ENCODE measurements at regions of chr19 and their contacts with region 1.

Region 1: DNA sequence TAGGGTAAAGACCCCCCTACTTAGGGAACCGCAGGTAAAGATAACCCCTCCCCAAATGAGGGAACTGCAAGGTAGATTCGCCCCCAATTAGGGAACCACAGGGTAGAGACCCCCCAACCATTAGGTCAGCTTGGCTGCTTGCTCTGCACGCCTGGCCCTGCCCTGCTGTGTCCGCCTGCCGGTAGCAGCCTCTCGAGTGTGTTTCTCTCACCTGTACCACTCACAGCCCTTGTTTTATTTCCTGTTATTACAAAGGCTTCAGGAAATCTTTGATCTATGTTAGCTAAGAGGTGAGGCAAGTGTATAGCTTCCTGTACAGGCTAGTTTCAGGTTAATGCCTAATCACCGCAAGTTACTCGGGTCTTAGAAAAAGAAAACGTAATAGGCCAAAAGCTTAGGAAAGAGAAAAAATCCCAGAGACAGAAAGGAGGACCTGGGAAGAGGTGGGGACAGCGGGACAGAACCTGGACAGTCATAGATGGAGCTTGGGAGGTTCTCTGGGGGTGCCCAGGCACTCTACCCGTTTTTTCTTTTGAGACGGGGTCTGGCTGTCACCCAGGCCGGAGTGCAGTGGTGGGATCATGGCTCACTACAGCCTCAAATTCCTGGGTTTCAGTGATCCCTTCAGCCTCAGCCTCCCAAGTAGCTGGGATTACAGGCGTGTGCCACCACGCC is 23.1 kb upstream of the EIF3G start:
- DNase-seq: peak; percentile 75 to 82 (median 77)
- H3K4me3 ChIP-seq: peak overlapping the region; percentile 34 to 44
- H3K4me3 Mint-ChIP-seq: peak overlapping the region; percentile 73 to 97 (median 87)
- H3K27ac ChIP-seq: peak overlapping the region; percentile 66
- H3K27ac Mint-ChIP-seq: peak overlapping the region; percentile 93 to 100 (median 99)
- H3K4me1 ChIP-seq: peaks cover 51% of the 10 kb centered on the region
- H3K4me1 Mint-ChIP-seq: peaks cover 18 to 52% (median 41%) of the 10 kb centered on the region in 4 donors
- H3K27me3 ChIP-seq: no peaks in the 10 kb centered on the region
- H3K27me3 Mint-ChIP-seq: no peaks in the 10 kb centered on the region

Region 2: DNA sequence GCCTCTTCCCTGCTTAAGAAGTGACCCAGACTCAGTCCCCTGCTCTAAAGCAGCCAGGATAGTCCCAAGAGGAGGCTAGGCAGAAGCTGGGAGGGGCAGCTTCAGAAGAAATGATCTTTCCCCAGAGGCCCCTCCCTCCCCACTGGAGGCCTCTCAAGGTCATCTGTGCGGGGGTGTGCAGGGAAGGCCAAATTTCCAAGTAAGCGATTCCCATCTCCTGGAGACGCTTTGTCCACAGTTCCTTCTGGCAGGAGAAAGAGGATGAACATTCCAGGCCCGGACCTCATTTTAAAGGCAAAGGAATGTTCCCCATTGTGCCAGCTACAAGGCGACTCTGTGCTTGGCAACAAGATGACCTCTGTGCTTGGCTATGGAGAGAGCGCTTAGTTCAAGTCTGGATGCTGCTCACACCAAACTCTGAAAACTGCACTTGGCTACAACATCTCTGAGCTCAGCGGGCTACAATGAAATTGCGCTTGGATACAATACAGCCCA is 156.0 kb before region 1 on chr19:
- CTCF ChIA-PET with region 1: no interaction called
- POLR2A ChIA-PET with region 1: no interaction called
- intact Hi-C with region 1: no loop called
- DNase-seq: no peak
- H3K4me3 ChIP-seq: no peak overlapping the region
- H3K4me3 Mint-ChIP-seq: no peak overlapping the region
- H3K27ac ChIP-seq: no peak overlapping the region
- H3K27ac Mint-ChIP-seq: no peak overlapping the region
- H3K4me1 ChIP-seq: no peaks in the 10 kb centered on the region
- H3K4me1 Mint-ChIP-seq: no peaks in the 10 kb centered on the region
- H3K27me3 ChIP-seq: no peaks in the 10 kb centered on the region
- H3K27me3 Mint-ChIP-seq: peaks cover 2 to 5% of the 10 kb centered on the region in 2 donors

Region 3: DNA sequence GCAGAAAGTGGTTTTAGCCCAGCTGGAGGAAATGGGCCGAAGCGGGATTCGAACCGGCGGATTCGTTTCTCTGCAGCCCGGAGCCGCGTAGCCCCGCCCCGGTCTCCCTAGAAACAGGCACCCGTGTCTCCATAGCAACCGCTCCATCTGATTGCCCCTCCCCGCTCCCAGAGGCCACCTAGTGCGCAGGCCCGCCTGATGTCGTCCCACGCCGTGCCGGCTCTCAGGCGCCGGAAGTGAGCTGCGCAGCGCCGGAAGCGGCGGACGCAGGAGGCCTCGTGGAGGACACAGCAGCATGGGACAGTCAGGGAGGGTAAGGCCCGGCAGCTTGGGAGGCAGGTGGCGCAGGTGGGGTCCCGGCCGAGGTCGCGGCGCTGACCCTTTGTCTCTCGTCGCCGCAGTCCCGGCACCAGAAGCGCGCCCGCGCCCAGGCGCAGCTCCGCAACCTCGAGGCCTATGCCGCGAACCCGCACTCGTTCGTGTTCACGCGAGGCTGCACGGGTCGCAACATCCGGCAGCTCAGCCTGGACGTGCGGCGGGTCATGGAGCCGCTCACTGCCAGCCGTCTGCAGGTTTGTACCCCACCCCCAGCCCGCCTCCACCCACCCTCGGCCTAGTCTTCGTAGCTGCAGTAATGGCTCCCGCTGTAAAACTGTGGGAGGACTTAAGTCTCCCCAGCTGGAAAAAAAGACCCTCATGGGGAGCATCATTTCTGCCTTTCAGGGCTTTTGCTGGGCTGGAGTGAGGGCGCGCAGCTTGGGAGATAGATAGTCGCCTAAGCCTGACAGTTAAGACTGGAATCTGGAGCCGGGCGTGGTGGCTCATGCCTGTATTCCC is 36.5 kb before region 1 on chr19 and contains the start of gene PPAN:
- CTCF ChIA-PET with region 1: interaction called, 23 read pairs
- POLR2A ChIA-PET with region 1: interaction called, 38 read pairs
- intact Hi-C with region 1: loop called (anchors 2 kb)
- DNase-seq: peak; percentile 96 to 98 (median 98)
- H3K4me3 ChIP-seq: peak within 1 kb of the TSS; percentile 58 to 74
- H3K4me3 Mint-ChIP-seq: peak within 1 kb of the TSS; percentile 72 to 92 (median 88)
- H3K27ac ChIP-seq: peak within 1 kb of the TSS; percentile 89
- H3K27ac Mint-ChIP-seq: peak within 1 kb of the TSS; percentile 95 to 100 (median 97)
- H3K4me1 ChIP-seq: peaks cover 77% of the 10 kb centered on the region
- H3K4me1 Mint-ChIP-seq: peaks cover 38 to 86% (median 59%) of the 10 kb centered on the region in 4 donors
- H3K27me3 ChIP-seq: no peaks in the 10 kb centered on the region
- H3K27me3 Mint-ChIP-seq: no peaks in the 10 kb centered on the region
- total RNA-seq, gene PPAN: 92.5 to 102 TPM

Region 4: GRCh38 chr19:10112895-10113591 is 29.8 kb before region 1 on chr19:
- CTCF ChIA-PET with region 1: interaction called, 23 read pairs
- POLR2A ChIA-PET with region 1: interaction called, 31 read pairs
- intact Hi-C with region 1: no loop called
- DNase-seq: peak; percentile 65 to 77 (median 68)
- H3K4me3 ChIP-seq: no peak overlapping the region
- H3K4me3 Mint-ChIP-seq: peak overlapping the region; percentile 55 to 89 (median 78)
- H3K27ac ChIP-seq: peak overlapping the region; percentile 66
- H3K27ac Mint-ChIP-seq: peak overlapping the region; percentile 91 to 97 (median 95)
- H3K4me1 ChIP-seq: peaks cover 56% of the 10 kb centered on the region
- H3K4me1 Mint-ChIP-seq: peaks cover 22 to 74% (median 31%) of the 10 kb centered on the region in 4 donors
- H3K27me3 ChIP-seq: no peaks in the 10 kb centered on the region
- H3K27me3 Mint-ChIP-seq: no peaks in the 10 kb centered on the region

Region 5: DNA sequence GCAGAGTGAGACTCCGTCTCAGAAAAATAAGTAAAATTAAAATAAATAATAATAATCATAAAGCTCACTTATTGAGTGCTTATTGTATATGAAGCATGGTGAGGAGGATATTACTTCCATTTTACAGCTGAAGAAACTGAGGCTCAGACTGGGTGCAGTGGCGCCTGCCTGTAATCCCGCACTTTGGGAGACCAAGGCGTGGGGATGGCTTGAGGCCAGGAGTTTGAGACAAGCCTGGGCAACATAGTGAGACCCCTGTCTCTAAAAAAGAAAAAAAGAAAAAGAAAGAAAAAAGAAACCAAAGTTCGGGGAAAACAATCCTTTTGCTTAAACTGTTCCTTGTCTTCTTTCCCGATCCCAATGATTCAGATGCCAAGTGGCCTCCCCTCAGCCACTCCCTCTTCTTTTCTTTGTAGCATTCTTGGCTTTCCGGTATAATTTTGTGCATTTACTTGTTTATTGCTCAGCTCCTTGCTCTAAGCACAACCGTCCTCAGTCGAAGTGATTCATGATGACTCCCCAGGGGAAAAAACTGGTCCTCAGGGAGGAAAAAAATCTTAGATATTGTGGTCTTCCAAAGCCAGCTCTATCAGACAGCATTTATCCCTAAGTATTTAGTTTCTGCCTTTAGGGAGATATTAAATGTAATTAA is 22.2 kb before region 1 on chr19:
- CTCF ChIA-PET with region 1: interaction called, 21 read pairs
- POLR2A ChIA-PET with region 1: interaction called, 28 read pairs
- intact Hi-C with region 1: loop called (anchors 1 kb)
- DNase-seq: no peak
- H3K4me3 ChIP-seq: no peak overlapping the region
- H3K4me3 Mint-ChIP-seq: peak overlapping the region in 3 of 8 donors; percentile 9 to 55 (median 27)
- H3K27ac ChIP-seq: no peak overlapping the region
- H3K27ac Mint-ChIP-seq: no peak overlapping the region
- H3K4me1 ChIP-seq: peaks cover 25% of the 10 kb centered on the region
- H3K4me1 Mint-ChIP-seq: peaks cover 3 to 35% (median 10%) of the 10 kb centered on the region in 4 donors
- H3K27me3 ChIP-seq: no peaks in the 10 kb centered on the region
- H3K27me3 Mint-ChIP-seq: no peaks in the 10 kb centered on the region

Region 6: DNA sequence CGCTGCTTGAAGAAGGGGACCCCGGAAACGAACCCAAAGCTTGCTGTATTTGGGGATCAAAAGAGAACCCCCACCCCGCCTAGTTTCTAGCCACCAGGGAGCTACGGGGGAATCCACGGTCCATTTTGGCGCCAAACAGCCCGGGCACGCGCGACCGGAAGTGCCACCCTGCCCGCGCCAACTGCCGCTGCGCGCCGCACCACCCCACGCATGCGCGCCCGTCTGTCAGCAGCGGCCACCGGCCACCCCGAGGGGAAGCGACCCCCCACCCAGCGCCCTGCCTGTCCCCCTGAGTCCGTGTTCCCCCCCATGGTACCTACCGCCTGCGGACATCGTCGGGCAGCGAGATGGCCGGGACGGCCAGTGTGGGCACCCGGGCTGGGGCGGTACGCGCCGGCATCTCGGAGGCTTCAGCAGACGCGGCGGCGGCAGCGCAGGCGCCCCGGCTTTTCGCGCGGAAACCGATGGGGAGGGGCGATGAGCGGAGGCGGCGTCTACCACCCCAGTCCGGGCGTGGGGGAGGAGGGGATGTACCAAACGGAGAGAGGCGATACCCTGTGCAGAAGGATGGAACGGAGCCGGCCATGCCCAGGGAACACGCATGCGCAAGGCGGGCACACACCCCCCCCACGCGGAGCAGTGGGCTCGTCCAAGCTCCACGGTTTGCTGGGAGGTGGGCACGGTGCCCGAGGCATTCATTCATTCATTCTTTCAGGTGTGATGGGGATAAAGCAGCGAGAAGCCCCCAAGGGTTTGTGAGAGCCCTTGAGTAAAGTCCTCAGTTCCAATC is 51.9 kb after region 1 on chr19 and contains the start of gene DNMT1:
- CTCF ChIA-PET with region 1: no interaction called
- POLR2A ChIA-PET with region 1: interaction called, 27 read pairs
- intact Hi-C with region 1: no loop called
- DNase-seq: peak; percentile 94 to 98 (median 95)
- H3K4me3 ChIP-seq: peak within 1 kb of the TSS; percentile 61 to 62
- H3K4me3 Mint-ChIP-seq: peak within 1 kb of the TSS; percentile 90 to 97 (median 96)
- H3K27ac ChIP-seq: peak within 1 kb of the TSS; percentile 77
- H3K27ac Mint-ChIP-seq: peak within 1 kb of the TSS; percentile 83 to 97 (median 95)
- H3K4me1 ChIP-seq: peaks cover 41% of the 10 kb centered on the region
- H3K4me1 Mint-ChIP-seq: peaks cover 22 to 52% (median 37%) of the 10 kb centered on the region in 4 donors
- H3K27me3 ChIP-seq: no peaks in the 10 kb centered on the region
- H3K27me3 Mint-ChIP-seq: no peaks in the 10 kb centered on the region
- total RNA-seq, gene DNMT1: 208 to 250 TPM

Region 7: DNA sequence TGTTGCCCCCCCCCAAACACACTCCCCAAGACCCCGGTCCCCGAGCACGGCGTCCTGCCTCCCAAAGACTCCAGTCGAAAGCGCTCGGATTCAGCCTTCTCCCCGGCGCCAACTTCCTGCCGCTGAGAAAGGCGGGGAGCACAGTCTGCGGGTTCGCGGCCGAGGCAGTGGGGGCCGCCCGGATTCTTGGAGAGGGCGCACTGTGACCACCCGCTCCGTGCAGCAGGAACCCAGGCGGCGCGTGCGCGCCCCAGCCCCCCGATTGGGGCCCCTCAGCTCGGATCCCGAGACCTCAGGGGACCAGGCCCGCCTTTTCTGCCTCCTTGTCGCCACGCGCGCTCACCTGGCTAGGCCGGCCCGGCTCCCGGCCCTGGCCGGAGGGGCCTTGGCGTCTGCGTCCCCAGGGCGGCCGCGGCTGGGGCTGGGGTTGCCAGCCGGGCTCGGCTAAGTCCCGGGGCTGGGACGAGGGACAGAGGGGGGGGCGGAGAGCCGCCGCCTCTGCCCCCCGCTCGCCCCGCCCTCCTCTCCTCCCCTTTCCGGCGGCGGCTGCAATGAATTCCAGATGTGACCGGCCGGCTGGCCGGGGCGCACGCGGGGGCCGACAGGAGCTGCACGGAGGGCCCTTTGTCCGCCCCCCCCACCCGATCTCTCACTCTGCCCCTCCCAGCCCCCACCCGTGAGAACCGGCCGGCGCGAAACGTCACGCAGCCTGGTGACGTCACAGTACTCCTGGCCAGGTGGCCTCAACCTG is 88.2 kb after region 1 on chr19 and contains the start of gene S1PR2:
- CTCF ChIA-PET with region 1: interaction called, 6 read pairs
- POLR2A ChIA-PET with region 1: interaction called, 12 read pairs
- intact Hi-C with region 1: loop called (anchors 5 kb)
- DNase-seq: peak; percentile 67 to 86 (median 75)
- H3K4me3 ChIP-seq: peak within 1 kb of the TSS; percentile 69 to 77
- H3K4me3 Mint-ChIP-seq: peak within 1 kb of the TSS; percentile 87 to 92 (median 90)
- H3K27ac ChIP-seq: peak within 1 kb of the TSS; percentile 92
- H3K27ac Mint-ChIP-seq: peak within 1 kb of the TSS; percentile 92 to 97 (median 94)
- H3K4me1 ChIP-seq: peaks cover 37% of the 10 kb centered on the region
- H3K4me1 Mint-ChIP-seq: peaks cover 20 to 52% (median 30%) of the 10 kb centered on the region in 4 donors
- H3K27me3 ChIP-seq: no peaks in the 10 kb centered on the region
- H3K27me3 Mint-ChIP-seq: no peaks in the 10 kb centered on the region
- total RNA-seq, gene S1PR2: 9.0 to 9.4 TPM

Measured in CD4-positive, alpha-beta memory T cell (primary cell).